Breast epithelium (tissue), 4 donors: ENCODE measurements at regions of chr17 and their contacts with region 1.

Region 1: DNA sequence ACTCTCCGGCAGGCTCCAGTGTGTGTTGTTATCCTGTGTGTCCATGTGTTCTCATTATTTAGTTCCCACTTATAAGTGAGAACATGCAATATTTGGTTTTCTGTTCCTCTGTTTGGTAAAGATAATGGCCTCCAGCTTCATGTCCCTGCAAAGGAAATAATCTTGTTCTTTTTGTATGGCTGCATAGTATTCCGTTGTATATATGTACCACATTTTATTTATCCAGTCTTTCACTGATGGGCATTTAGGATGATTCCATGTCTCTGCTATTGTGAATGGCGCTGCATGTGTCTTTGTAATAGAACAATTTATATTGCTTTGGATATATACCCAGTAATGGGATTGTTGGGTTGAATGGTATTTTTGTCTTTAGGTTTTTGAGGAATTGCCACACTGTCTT is 807.3 kb upstream of the CA10 start:
- DNase-seq: no peak
- H3K4me3 ChIP-seq: no peak overlapping the region
- H3K27ac ChIP-seq: no peak overlapping the region
- H3K4me1 ChIP-seq: no peaks in the 10 kb centered on the region
- H3K27me3 ChIP-seq: no peaks in the 10 kb centered on the region
- CTCF ChIP-seq: no peak
- POLR2A ChIP-seq: no peak

Region 2: DNA sequence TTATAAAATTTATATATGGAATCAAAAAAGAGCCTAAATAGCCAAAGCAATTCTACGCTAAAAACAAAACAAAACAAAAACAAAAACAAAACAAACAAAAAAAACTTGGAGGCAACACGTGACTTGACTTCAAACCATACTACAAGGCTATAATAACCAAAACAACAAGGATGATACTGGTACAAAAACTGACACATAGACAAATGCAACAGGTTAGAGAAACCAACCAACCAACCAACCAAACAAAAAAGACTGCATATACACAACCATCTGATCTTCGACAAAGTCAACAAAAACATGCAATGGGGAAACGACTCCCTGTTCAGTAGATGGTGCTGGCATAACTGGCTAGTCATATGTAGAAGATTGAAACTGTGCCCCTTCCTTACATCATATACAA is 476.6 kb after region 1 on chr17:
- intact Hi-C with region 1: no loop called
- DNase-seq: no peak
- H3K4me3 ChIP-seq: no peak overlapping the region
- H3K27ac ChIP-seq: no peak overlapping the region
- H3K4me1 ChIP-seq: no peaks in the 10 kb centered on the region
- H3K27me3 ChIP-seq: no peaks in the 10 kb centered on the region
- CTCF ChIP-seq: no peak
- POLR2A ChIP-seq: no peak

Region 3: DNA sequence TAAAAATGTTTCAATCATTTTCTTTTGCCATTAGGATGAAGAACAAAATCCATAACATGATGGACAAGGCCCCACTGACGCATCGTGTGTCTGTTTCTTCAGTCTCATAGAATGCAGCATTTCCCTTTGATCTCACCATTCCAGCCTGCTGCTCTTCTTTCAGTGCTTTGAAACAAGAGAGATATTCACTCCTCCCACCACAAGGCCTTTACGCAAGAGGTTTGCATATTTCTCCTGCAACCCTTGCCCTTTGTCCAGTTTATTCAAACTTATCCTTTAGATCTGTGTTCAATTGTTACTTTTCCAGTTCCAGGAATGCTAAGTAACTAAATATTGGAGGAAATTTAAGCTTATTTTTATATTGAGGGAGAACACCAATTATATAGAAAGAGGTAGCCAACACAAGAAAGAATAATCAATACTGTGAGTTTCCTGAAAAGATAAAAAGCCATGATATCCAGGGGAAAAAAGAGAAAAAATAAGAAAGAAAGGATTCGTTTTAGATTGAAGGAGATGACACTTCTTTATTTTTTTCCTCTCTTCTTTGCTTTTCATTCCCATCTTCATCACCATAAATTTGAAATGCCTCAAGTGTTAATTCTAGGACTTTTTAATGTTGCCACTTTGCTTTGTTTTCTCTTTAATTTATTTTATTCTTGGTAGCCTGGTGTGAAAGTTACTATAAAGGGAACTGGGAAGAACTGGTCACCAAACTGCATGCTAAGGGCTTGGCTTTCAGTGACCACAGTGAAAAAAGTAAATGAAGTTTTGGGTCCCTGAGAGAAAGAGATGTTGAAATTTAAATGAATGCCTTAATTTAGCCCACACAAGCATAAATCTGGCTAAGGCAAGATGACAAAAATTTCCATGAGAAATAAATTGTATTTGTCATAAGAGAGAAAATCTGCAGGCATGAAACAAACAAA is 958.9 kb after region 1 on chr17:
- intact Hi-C with region 1: loop called (anchors 5 kb)
- DNase-seq: no peak
- H3K4me3 ChIP-seq: no peak overlapping the region
- H3K27ac ChIP-seq: no peak overlapping the region
- H3K4me1 ChIP-seq: no peaks in the 10 kb centered on the region
- H3K27me3 ChIP-seq: no peaks in the 10 kb centered on the region
- CTCF ChIP-seq: no peak
- POLR2A ChIP-seq: no peak